GM10248 (cell line): ENCODE measurements at regions of chr14 and their contacts with region 1.

Region 1: GRCh38 chr14:69346710-69347109 is 51.4 kb downstream of the ERH start:
- DNase-seq: peak; percentile 56
- CTCF ChIP-seq: peak; percentile 50

Region 2: DNA sequence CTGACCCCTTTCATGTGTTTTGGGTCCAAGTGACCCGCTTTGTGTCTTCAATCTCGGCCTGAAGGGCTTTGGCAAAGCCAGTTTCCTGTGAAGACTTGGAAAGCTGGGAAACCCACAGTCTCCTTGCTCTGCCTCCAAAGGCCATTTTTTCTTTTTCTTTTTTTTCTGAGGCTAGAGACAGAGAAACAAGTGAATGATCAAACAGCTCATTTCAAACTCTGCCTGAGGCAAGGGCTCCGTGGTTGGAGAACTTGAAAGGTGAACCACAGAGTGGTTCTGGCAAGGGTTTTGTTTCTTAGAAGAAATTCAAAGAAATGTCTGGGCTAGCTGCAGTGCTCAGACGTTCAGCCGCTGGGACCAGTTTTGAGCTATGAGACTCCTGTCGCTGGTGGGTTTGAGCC is 11.3 kb before region 1 on chr14:
- CTCF ChIA-PET with region 1: interaction called, 21 read pairs
- POLR2A ChIA-PET with region 1: no interaction called
- DNase-seq: no peak
- CTCF ChIP-seq: no peak

Region 3: GRCh38 chr14:69363055-69363454 is 16.3 kb after region 1 on chr14:
- CTCF ChIA-PET with region 1: interaction called, 11 read pairs
- POLR2A ChIA-PET with region 1: interaction called, 4 read pairs
- DNase-seq: no peak
- CTCF ChIP-seq: no peak